Body of pancreas (tissue), 4 donors: ENCODE measurements at regions of chr20 and their contacts with region 1.

Region 1: GRCh38 chr20:62246872-62247665 is 8.7 kb downstream of the OSBPL2 start:
- DNase-seq: peak; percentile 67 to 81 (median 78)
- ATAC-seq: peak; percentile 19
- H3K4me3 ChIP-seq: no peak overlapping the region
- H3K27ac ChIP-seq: peak overlapping the region; percentile 84 to 93 (median 90)
- H3K4me1 ChIP-seq: peaks cover 78% of the 10 kb centered on the region
- H3K27me3 ChIP-seq: no peaks in the 10 kb centered on the region
- CTCF ChIP-seq: no peak
- POLR2A ChIP-seq: no peak

Region 2: DNA sequence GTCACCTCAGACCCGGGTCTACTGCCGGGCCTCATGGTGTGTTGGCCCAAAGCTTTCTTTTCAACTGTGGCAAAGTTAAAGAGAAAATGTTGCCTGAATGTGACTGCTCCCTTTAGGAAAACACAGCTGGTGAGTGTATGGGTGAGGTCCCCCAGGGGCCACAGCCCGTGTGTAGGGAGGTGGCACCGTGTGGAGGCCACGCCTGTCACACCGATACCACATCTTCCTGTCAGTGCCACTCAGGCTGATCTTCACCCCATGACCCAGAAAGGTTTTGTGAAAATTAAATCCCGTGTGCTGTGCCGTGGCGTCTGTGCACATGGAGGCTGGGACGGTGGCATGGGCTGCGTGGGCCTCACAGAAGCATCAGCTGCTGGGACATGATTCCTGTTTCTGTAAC is 45.0 kb after region 1 on chr20:
- intact Hi-C with region 1: loop called (anchors 10 kb)
- DNase-seq: no peak
- ATAC-seq: no peak
- H3K4me3 ChIP-seq: no peak overlapping the region
- H3K27ac ChIP-seq: no peak overlapping the region
- H3K4me1 ChIP-seq: peaks cover 5% of the 10 kb centered on the region
- H3K27me3 ChIP-seq: no peaks in the 10 kb centered on the region
- CTCF ChIP-seq: no peak
- POLR2A ChIP-seq: no peak